ENCODE measurements at regions of chr1 and their contacts with region 1.

Region 1: GRCh38 chr1:98468111-98468717 is 193.3 kb upstream of the SNX7 start:
- DNase-seq: peak; percentile 69
- H3K4me3 ChIP-seq: no peak overlapping the region
- H3K27ac ChIP-seq: no peak overlapping the region
- H3K4me1 ChIP-seq: peaks cover 7% of the 10 kb centered on the region; the same call in 1 of the 2 replicates
- H3K27me3 ChIP-seq: no peaks in the 10 kb centered on the region

Region 2: DNA sequence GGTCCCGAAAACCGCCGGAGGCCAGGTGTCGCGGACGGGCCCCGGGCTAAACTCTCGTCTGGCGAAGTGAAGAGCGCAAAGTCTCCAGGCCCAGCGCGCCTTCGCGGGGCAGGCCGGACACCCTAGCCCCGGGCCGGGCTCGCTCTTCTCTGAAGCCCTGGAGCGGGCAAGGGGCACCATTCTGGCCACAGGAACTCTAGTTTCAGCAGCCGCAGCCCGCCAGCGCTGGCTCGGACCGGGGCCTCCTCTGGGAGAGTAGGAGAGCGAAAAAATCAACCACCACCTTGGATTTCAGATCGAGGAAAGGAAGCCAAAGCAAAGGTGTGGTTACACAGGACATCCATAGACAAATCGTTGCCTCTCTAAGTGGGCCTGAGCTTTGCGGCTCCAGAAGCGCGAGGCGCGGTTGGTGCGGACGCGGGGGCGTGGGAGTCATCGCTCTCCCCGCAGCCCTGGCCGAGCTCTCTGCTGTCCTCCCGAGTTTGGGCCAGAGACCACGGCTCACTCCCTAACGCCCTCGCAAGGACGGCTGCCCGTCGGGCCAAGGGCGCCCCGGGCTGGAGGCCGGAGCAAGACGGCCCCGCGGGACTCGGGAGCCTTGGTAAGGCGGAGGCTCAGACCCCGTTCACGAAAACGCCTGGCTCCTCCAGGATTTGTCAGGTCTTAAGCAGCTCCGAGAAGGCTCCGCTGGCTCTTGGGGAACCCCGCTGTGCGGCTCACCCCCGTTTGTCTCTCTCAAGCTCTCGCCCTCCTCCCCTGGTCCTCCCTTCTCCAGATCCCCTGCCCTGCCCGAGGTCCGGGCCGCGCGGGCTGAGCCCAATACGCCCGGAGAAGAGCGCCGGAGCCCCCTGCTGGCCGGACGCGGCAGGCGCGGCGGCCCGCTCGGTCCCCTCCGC is 414.5 kb before region 1 on chr1:
- in situ Hi-C with region 1: loop called (anchors 10 kb)
- DNase-seq: peak; percentile 85
- H3K4me3 ChIP-seq: peak overlapping the region; percentile 68
- H3K27ac ChIP-seq: peak overlapping the region; percentile 30
- H3K4me1 ChIP-seq: peaks cover 31% of the 10 kb centered on the region
- H3K27me3 ChIP-seq: no peaks in the 10 kb centered on the region

Region 3: DNA sequence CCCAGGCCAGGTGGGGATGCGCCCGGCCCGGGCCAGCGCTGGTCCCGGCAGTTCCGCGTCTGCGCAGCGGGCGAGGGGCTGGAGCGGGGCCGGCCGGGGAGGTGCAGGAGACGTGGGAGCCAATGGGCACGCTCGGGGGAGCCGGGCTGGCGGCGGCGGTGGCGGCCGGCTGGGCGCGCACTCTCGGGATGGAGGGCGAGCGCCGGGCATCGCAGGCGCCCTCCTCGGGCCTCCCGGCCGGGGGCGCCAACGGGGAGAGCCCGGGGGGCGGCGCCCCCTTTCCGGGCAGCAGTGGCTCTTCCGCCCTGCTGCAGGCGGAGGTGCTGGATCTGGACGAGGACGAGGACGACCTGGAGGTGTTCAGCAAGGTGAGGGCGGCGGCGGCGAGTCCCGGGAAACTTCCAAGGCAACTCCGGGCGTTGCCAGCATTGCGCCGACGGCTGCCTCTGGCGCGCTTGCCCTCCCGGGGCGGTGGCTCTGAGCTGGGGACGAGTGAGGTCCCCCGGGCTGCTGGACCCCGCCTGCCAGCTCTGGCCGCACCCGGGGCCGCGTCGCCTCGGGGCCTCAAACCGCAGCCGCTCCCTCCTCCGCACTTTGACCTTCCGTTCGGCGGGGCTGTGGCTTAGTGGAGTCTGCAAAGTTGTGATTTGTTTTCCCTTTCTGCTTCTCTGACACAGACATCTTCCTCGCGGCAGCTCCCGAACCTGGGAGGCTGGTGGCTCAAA is 193.5 kb after region 1 on chr1 and contains the start of gene SNX7:
- in situ Hi-C with region 1: no loop called
- DNase-seq: peak; percentile 91
- H3K4me3 ChIP-seq: peak within 1 kb of the TSS; percentile 82
- H3K27ac ChIP-seq: peak within 1 kb of the TSS; percentile 66
- H3K4me1 ChIP-seq: peaks cover 22% of the 10 kb centered on the region
- H3K27me3 ChIP-seq: no peaks in the 10 kb centered on the region
- total RNA-seq, gene SNX7: 49.1 and 59.7 TPM in 2 replicates